Mammary epithelial cell (primary cell): ENCODE measurements at regions of chr5 and their contacts with region 1.

Region 1: DNA sequence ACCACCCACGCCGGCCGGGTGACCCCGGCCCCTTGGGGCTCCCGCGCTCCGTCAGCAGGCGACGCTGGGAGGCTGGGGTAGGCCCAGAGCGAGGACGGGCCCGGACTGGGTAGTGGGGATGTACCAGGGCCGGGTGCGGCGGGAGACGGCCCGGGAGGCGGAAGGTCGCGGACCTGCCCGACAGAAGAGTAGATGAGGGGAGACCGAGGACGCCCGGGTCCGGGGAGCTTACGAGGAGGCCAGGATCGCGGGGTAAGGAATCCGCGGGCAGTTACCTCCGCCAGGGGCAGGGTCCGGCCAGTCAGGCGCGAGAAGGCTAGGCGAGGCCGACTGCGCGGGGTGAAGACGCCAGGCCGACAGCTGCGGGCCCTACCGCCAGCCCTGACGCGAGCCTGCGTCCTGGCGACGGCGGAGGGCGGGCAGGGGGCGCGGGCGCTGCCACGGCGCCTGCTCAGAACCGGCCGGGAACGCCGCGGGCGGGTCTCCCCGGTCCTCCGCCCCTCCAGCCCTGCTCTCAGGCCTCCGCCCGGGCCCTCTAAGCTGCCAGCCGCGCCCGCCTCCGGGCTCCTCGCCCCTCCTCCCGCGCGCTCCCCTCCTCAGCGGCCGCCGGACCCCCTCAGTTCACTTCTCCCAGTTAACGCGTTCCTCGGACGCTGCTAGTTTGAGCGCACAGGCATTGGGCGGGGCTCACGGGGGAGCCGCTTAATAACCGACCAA is at the start of gene CPLANE1:
- DNase-seq: peak; percentile 60
- H3K4me3 ChIP-seq: peak within 1 kb of the TSS; percentile 84 to 97 (median 87)
- H3K27ac ChIP-seq: peak within 1 kb of the TSS; percentile 43
- H3K4me1 ChIP-seq: peaks cover 4% of the 10 kb centered on the region
- H3K27me3 ChIP-seq: no peaks in the 10 kb centered on the region
- CTCF ChIP-seq: peak in 1 of 2 donors; percentile 17
- total RNA-seq, gene CPLANE1: 22.4 to 38.2 TPM

Region 2: DNA sequence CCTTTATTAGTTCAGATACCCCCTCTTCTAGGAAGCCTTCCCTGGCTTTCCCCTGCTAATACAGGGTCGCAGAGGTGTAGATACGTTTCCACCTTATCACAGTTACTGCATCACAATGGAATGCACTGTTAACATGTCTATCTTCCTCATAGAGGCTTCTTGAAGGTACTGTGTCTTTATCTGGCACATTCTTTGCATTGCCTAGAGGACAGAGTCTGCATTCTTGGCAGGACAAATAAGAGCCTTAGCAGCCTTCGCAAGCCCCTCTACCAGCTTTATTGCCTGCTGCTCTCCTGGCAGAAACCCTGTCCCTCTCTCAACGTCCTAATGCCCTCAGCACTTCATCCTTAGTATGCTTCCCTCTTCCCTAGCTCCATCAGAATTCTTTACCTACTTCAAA is 611.1 kb before region 1 on chr5:
- CTCF ChIA-PET with region 1: no interaction called
- dilution Hi-C with region 1: no loop called
- in situ Hi-C with region 1: no loop called
- intact Hi-C with region 1: no loop called
- DNase-seq: no peak
- H3K4me3 ChIP-seq: no peak overlapping the region
- H3K27ac ChIP-seq: no peak overlapping the region
- H3K4me1 ChIP-seq: peaks cover 5% of the 10 kb centered on the region
- H3K27me3 ChIP-seq: no peaks in the 10 kb centered on the region
- CTCF ChIP-seq: no peak

Region 3: DNA sequence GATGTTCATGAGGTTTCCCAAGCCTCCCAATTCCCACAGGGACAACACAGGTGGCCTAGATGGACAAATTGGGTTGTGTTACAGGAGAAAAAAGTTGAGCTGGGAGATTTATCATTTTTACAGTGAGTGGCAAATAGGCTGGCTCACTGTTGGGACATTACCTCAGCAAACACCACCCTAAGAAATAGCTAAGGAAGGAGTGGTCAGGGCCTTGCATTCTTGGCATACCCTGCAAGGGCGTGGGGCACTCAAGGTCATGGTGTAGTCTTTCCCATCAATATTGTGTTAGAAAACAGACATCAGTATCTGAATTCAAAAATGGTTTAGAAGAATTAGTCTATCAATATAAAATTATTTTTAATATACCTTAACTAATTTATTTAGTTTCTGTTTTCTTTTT is 23.4 kb after region 1 on chr5:
- CTCF ChIA-PET with region 1: interaction called, 11 read pairs
- dilution Hi-C with region 1: no loop called
- in situ Hi-C with region 1: no loop called
- intact Hi-C with region 1: loop called (anchors 1 kb)
- DNase-seq: peak; percentile 32
- H3K4me3 ChIP-seq: no peak overlapping the region
- H3K27ac ChIP-seq: peak overlapping the region; percentile 58
- H3K4me1 ChIP-seq: peaks cover 8% of the 10 kb centered on the region
- H3K27me3 ChIP-seq: no peaks in the 10 kb centered on the region
- CTCF ChIP-seq: no peak

Region 4: GRCh38 chr5:37308796-37309195 is 59.7 kb after region 1 on chr5:
- CTCF ChIA-PET with region 1: no interaction called
- dilution Hi-C with region 1: no loop called
- in situ Hi-C with region 1: no loop called
- intact Hi-C with region 1: loop called (anchors 2 kb)
- DNase-seq: peak; percentile 6
- H3K4me3 ChIP-seq: no peak overlapping the region
- H3K27ac ChIP-seq: no peak overlapping the region
- H3K4me1 ChIP-seq: no peaks in the 10 kb centered on the region
- H3K27me3 ChIP-seq: no peaks in the 10 kb centered on the region
- CTCF ChIP-seq: no peak

Region 5: DNA sequence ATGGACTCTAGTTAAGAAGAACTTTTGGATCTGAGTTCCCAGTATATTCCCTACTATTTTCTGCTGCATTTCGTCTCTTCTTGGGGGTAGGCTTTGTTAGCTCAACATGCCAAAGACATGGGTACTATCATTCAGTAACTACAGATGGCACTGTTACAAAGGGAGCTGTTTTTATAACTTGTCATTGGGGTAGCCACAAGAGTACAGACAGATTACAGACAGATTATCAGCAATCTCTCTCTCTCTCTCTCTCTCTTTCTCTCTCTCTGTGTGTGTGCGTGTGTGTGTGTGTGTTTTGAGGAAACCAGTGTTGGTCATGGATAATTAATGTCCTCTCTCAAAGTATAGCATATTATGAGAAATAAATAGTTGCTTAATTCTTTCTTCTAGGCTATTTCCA is 246.1 kb after region 1 on chr5:
- CTCF ChIA-PET with region 1: no interaction called
- dilution Hi-C with region 1: no loop called
- in situ Hi-C with region 1: no loop called
- intact Hi-C with region 1: no loop called
- DNase-seq: peak; percentile 14
- H3K4me3 ChIP-seq: no peak overlapping the region
- H3K27ac ChIP-seq: no peak overlapping the region
- H3K4me1 ChIP-seq: peaks cover 14% of the 10 kb centered on the region
- H3K27me3 ChIP-seq: no peaks in the 10 kb centered on the region
- CTCF ChIP-seq: peak in 1 of 2 donors; percentile 29

Region 6: DNA sequence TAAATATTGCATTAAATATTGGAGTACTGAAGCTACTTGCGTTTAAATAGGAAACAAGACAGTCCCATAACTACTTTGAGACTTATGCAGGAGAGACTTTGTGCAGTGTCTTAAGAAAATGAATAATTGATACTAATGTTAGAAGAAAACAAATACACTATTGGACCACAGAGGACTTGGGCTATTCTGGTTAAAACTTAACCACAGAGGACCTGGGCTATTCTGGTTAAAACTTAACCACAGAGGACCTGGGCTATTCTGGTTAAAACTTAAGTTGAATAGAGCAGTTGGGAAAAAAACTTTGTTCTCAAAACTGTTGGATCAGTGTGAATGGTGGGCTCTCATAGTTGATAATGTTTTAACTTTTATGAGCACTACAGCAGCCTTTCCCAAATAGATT is 271.7 kb after region 1 on chr5:
- CTCF ChIA-PET with region 1: no interaction called
- dilution Hi-C with region 1: no loop called
- in situ Hi-C with region 1: no loop called
- intact Hi-C with region 1: no loop called
- DNase-seq: no peak
- H3K4me3 ChIP-seq: no peak overlapping the region
- H3K27ac ChIP-seq: no peak overlapping the region
- H3K4me1 ChIP-seq: no peaks in the 10 kb centered on the region
- H3K27me3 ChIP-seq: no peaks in the 10 kb centered on the region
- CTCF ChIP-seq: no peak